ENCODE measurements at regions of chrX and their contacts with region 1.

Region 1: DNA sequence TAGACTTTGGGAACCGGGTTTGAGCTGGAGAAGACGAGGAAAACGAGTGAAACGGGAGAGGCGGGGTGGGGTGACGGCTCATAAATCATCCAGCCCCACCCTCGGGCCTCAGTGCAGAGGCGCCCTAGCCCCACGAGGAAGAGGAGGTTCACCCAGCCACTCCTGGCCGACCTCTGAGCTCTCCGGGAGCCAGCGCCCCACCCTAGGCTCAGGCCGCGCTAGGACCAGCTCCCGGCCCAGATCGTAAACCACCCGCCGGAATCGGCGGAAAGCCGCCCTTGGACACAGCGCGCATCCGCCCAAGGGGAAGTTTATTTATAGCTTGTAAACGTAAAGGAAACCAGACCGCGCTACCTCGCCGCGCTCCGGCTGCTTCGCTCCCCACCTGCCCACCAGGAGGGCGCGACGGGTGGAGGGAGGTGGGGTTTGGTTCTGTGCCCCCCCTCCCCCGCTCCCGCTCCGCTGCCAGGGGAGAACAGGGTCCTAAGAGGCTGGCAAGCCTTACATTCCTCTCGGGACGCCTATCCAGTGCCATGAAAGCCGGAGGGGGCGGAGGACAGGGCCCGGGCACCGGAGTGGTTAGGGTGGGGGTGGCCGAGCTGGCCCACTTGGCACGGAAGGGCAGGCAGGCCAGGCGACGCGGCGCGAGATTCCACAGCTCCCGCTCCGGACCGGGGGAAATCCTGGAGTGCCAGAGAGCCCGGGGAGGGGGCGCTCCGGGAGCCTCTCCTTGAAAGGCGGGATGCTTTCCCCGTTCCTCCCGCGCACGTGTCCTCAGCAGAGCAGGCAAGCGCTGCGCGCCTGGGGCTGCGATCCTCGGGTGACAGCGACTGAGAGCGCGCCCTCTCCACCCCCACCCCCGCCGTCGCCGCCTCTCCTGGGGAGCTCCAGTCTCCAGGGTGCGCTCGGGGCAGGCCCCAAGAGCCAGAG is 84.2 kb downstream of the BCOR start:
- DNase-seq: peak; percentile 49 to 67
- ATAC-seq: peak; percentile 59 to 60
- H3K4me3 ChIP-seq: peak overlapping the region; percentile 61 to 79 (median 70)
- H3K27ac ChIP-seq: peak overlapping the region; percentile 92 to 95 (median 94)
- H3K4me1 ChIP-seq: peaks cover 0 to 7% of the 10 kb centered on the region in 2 donors
- H3K27me3 ChIP-seq: peaks cover 0 to 8% (median 7%) of the 10 kb centered on the region in 3 donors
- CTCF ChIP-seq: no peak
- POLR2A ChIP-seq: peak; percentile 69 to 77

Region 2: GRCh38 chrX:39445336-39445735 is 568.2 kb before region 1 on chrX:
- in situ Hi-C with region 1: no loop called
- intact Hi-C with region 1: no loop called
- DNase-seq: no peak
- ATAC-seq: no peak
- H3K4me3 ChIP-seq: no peak overlapping the region
- H3K27ac ChIP-seq: no peak overlapping the region
- H3K4me1 ChIP-seq: no peaks in the 10 kb centered on the region
- H3K27me3 ChIP-seq: no peaks in the 10 kb centered on the region
- CTCF ChIP-seq: peak in 1 of 5 experiments; percentile 34
- POLR2A ChIP-seq: no peak

Region 3: GRCh38 chrX:39907964-39908616 is 105.4 kb before region 1 on chrX:
- in situ Hi-C with region 1: no loop called
- intact Hi-C with region 1: loop called (anchors 10 kb)
- DNase-seq: peak; percentile 49 to 72
- ATAC-seq: peak; percentile 93 to 97
- H3K4me3 ChIP-seq: peak overlapping the region in 1 of 4 donors; percentile 28
- H3K27ac ChIP-seq: peak overlapping the region; percentile 54 to 76 (median 70)
- H3K4me1 ChIP-seq: peaks cover 0 to 18% of the 10 kb centered on the region in 2 donors
- H3K27me3 ChIP-seq: no peaks in the 10 kb centered on the region
- CTCF ChIP-seq: no peak
- POLR2A ChIP-seq: no peak

Region 4: GRCh38 chrX:40083120-40083978 is 69.8 kb after region 1 on chrX:
- in situ Hi-C with region 1: no loop called
- intact Hi-C with region 1: loop called (anchors 5 kb)
- DNase-seq: no peak
- ATAC-seq: peak; percentile 34 to 61
- H3K4me3 ChIP-seq: peak overlapping the region; percentile 45 to 52 (median 50)
- H3K27ac ChIP-seq: peak overlapping the region in 1 of 4 donors; percentile 25
- H3K4me1 ChIP-seq: peaks cover 0 to 46% of the 10 kb centered on the region in 2 donors
- H3K27me3 ChIP-seq: peaks cover 0 to 9% (median 4%) of the 10 kb centered on the region in 3 donors
- CTCF ChIP-seq: no peak
- POLR2A ChIP-seq: no peak

Region 5: GRCh38 chrX:40153335-40154249 is 140.1 kb after region 1 on chrX:
- in situ Hi-C with region 1: loop called in 1 of 4 experiments (anchors 25 kb)
- intact Hi-C with region 1: loop called (anchors 1 kb)
- DNase-seq: peak in 1 of 2 donors; percentile 30
- ATAC-seq: peak; percentile 6 to 20
- H3K4me3 ChIP-seq: peak overlapping the region; percentile 50 to 63 (median 60)
- H3K27ac ChIP-seq: peak overlapping the region; percentile 77 to 86 (median 82)
- H3K4me1 ChIP-seq: peaks cover 4 to 18% of the 10 kb centered on the region in 2 donors
- H3K27me3 ChIP-seq: peaks cover 0 to 22% (median 5%) of the 10 kb centered on the region in 3 donors
- CTCF ChIP-seq: peak in 1 of 5 experiments; percentile 20
- POLR2A ChIP-seq: no peak

Region 6: DNA sequence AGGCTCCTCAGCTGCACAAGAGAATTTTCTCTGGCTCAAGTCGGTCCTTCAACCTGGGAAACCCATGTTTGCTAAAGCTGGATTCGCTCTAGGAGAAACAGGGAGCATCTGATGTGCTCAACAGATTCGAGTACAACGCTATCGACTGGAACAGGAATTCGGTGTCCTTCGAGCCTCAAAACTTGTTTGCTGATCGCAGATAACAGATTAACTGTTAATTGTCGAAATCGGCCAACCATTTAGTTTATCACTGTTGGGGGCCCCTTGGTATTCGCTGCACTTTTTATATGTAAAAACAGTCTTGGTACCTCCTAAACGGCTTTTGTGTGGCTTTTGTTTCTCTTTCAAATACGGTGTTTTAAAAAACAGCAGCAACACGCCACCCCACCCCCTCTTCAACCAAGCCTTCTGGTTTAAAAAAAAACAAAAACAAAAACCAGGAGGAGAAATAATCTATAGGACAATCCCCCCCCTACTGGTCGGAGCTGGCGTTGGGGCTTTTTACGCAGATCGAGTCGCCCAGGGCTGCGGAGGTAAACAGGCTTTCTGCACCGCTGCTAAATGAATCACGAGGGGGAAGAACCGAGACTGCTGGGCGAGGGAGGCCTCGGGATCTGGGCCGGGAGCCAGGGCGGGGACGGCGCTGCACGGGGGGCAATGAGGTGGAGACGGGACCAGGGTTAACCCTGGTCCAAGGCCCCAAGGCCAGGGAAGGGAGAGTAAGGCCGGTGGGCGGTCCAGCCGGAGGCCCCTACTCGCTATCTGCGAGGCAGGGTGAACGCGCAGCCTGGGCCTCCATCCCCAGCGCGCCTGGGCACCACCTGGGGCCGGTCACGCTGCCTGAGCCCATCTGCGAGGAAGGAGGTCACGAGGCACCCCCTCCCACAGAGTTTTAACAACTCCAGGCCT is 155.9 kb after region 1 on chrX:
- in situ Hi-C with region 1: loop called in 1 of 4 experiments (anchors 25 kb)
- intact Hi-C with region 1: no loop called
- DNase-seq: no peak
- ATAC-seq: no peak
- H3K4me3 ChIP-seq: peak overlapping the region in 1 of 4 donors; percentile 2
- H3K27ac ChIP-seq: no peak overlapping the region
- H3K4me1 ChIP-seq: peaks cover 2 to 19% of the 10 kb centered on the region in 2 donors
- H3K27me3 ChIP-seq: peaks cover 0 to 55% (median 29%) of the 10 kb centered on the region in 3 donors
- CTCF ChIP-seq: peak in 1 of 5 experiments; percentile 31
- POLR2A ChIP-seq: no peak

Region 7: GRCh38 chrX:40244980-40245379 is 231.4 kb after region 1 on chrX:
- in situ Hi-C with region 1: no loop called
- intact Hi-C with region 1: no loop called
- DNase-seq: no peak
- ATAC-seq: no peak
- H3K4me3 ChIP-seq: no peak overlapping the region
- H3K27ac ChIP-seq: no peak overlapping the region
- H3K4me1 ChIP-seq: no peaks in the 10 kb centered on the region
- H3K27me3 ChIP-seq: no peaks in the 10 kb centered on the region
- CTCF ChIP-seq: no peak
- POLR2A ChIP-seq: no peak